ENCODE measurements at regions of chr1 and their contacts with region 1.

Region 1: DNA sequence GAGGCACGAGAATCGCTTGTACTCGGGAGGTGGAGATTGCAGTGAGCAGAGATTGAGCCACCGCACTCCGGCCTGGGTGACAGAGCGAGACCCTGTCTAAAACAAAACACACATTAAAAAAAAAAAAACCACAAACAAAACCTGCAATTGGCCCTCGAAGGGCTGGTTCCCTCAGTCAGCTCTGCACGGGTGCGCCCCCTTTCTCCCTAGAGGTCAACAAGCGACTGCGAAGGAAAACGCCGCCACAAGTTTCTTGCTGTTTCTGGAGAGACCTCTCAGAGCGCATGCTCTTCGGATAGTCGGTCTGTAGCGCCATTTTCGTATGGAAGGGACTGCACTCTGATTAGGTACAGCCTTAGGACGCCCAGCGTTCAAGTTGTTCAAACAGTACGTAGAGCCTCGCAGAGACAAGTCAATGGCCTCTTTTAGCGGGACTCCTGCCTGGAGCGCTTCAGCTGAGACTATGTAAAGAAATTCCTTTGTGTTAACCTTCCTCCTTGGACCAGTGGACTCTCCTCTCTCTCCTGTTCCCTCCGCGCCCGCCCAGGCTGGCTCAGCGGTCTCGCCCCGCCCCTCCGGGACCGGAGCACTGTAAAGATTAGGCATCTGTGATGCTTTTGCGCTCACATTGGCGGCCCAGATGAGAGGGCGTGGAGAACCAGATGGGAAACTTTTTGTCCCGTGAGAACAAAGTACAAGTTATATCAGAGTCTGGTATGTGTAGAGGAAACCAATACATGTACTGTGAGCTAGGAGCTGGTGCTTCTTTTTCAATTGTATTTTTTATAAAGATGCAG is 1.0 kb upstream of the CDC14A start:
- DNase-seq: peak; percentile 72 to 98 (median 82)
- ATAC-seq: peak; percentile 80
- H3K4me3 ChIP-seq: peak overlapping the region; percentile 91
- H3K27ac ChIP-seq: peak overlapping the region; percentile 98
- H3K4me1 ChIP-seq: peaks cover 21 to 43% of the 10 kb centered on the region in 2 experiments
- H3K27me3 ChIP-seq: no peaks in the 10 kb centered on the region
- CTCF ChIP-seq: peak; percentile 78 to 92 (median 79)
- EP300 ChIP-seq: no peak
- POLR2A ChIP-seq: peak; percentile 96
- RAD21 ChIP-seq: peak; percentile 36 to 51; a peak in 3 of 4 replicates

Region 2: DNA sequence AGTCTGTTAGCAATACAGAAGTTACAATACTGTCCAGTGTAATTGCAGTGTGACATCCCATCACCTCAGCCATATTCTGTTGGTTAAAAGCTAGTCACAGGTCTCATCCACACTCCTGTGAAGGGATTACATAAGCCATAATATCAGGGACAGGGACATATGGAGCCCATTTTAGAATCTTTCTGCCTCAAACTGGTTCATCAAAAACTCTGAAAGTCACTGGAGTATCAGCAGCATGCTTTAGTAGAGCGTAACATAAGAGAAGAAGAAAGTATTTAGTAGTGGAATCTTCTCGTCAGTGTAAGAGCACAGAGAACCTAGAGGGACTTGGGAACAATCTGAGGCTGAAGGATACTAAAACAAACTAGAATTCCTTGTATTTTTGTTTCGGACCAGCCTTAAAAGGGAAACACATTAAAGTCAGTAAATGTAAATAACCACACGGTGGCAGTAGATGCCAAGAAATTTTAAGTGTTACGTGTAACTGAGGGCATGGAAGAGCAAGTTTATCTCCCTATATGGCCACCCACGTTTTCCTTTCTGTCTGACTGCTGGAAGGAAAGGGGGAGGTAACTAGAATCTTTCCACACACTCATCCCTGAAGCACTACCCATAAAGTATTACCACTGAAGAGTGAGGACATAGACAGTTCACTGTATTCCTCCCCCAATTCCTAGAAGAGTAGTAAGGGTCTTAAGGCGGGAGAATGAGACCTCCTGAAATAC is 542.7 kb before region 1 on chr1:
- CTCF ChIA-PET with region 1: no interaction called
- POLR2A ChIA-PET with region 1: no interaction called
- in situ Hi-C with region 1: no loop called
- intact Hi-C with region 1: loop called (anchors 5 kb)
- DNase-seq: peak; percentile 74 to 93 (median 82)
- ATAC-seq: peak; percentile 95
- H3K4me3 ChIP-seq: no peak overlapping the region
- H3K27ac ChIP-seq: peak overlapping the region; percentile 69
- H3K4me1 ChIP-seq: peaks cover 0 to 11% of the 10 kb centered on the region in 2 experiments; a peak in 2 of 5 replicates
- H3K27me3 ChIP-seq: no peaks in the 10 kb centered on the region
- CTCF ChIP-seq: peak; percentile 54 to 84 (median 70)
- EP300 ChIP-seq: peak; percentile 52
- POLR2A ChIP-seq: no peak
- RAD21 ChIP-seq: peak; percentile 94 to 95

Region 3: GRCh38 chr1:99986656-99987225 is 364.6 kb before region 1 on chr1:
- CTCF ChIA-PET with region 1: no interaction called
- POLR2A ChIA-PET with region 1: no interaction called
- in situ Hi-C with region 1: no loop called
- intact Hi-C with region 1: no loop called
- DNase-seq: no peak
- ATAC-seq: peak; percentile 32
- H3K4me3 ChIP-seq: no peak overlapping the region
- H3K27ac ChIP-seq: no peak overlapping the region
- H3K4me1 ChIP-seq: 0 out of 5 replicates have a peak, but pooled peaks cover 0 to 2% of the 10 kb centered on the region in 2 experiments
- H3K27me3 ChIP-seq: no peaks in the 10 kb centered on the region
- CTCF ChIP-seq: no peak
- EP300 ChIP-seq: no peak
- POLR2A ChIP-seq: no peak
- RAD21 ChIP-seq: no peak

Region 4: DNA sequence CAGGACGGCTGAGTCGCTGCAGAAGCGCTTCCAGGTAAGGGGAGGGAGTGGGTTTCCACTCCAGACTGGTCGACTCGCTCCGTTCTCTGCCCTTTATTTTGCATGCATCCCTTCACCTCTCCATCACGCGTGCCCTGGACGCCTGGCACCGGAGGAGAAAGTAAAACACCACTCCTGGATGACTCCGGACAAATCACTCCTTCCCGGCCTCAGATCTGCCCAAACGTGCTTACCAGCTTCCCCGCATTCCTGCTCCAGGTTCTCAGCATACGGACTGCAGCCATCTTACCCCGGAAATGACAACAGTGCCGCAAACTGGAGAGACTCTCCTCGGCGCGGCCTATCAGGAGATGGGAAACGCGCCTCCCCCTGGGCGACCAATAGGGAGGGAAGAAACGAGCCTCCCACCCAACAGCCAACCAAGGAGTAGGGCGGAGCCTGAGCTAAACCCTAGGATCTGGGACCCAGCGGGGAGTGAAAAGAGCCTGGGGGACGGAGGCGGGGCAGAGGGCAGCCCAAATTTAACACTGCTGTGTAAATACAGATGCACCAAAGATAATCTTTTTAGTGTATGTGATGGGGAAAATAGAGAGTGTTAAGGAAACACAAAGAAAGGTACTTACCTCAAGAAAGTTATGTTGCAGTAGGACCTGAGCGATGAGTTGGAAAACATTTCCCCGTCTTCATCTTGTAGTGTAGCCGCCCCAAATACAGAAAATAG is 101.6 kb before region 1 on chr1 and contains the start of gene DBT:
- CTCF ChIA-PET with region 1: no interaction called
- POLR2A ChIA-PET with region 1: interaction called, 3 read pairs
- in situ Hi-C with region 1: no loop called
- intact Hi-C with region 1: loop called (anchors 10 kb)
- DNase-seq: peak; percentile 98 to 100 (median 100)
- ATAC-seq: peak; percentile 98
- H3K4me3 ChIP-seq: peak within 1 kb of the TSS; percentile 68
- H3K27ac ChIP-seq: peak within 1 kb of the TSS; percentile 83
- H3K4me1 ChIP-seq: peaks cover 4 to 21% of the 10 kb centered on the region in 2 experiments; a peak in 4 of 5 replicates
- H3K27me3 ChIP-seq: no peaks in the 10 kb centered on the region
- CTCF ChIP-seq: no peak
- EP300 ChIP-seq: peak; percentile 49
- POLR2A ChIP-seq: peak; percentile 98
- RAD21 ChIP-seq: 0 out of 4 replicates have a peak, but pooled peaks of 1 of the 2 experiments have one; percentile 7
- polyA plus RNA-seq, gene DBT: 2.7 to 3.3 TPM

Region 5: DNA sequence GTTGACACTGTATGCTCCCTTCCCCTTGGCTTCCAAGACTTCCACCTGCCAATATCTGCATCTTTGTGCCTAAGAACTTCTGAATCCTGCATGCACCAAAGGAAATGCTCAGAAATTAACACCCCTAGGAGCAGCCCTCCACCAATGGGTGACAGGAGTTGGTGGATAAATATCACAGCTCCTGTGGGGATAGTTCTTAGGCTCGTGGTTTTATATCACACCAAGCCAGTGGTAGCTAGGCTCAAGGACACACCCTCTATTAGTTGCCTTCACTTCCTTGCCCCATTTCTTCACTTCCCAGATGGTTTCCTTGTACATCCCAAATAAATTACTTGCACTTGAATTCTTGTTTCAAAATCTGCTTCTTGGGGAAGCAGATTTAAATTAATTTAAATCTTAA is 15.9 kb before region 1 on chr1:
- CTCF ChIA-PET with region 1: no interaction called
- POLR2A ChIA-PET with region 1: interaction called, 17 read pairs
- in situ Hi-C with region 1: no loop called
- intact Hi-C with region 1: no loop called
- DNase-seq: peak in 2 of 4 experiments; percentile 19 to 30
- ATAC-seq: no peak
- H3K4me3 ChIP-seq: no peak overlapping the region
- H3K27ac ChIP-seq: no peak overlapping the region
- H3K4me1 ChIP-seq: peaks cover 8 to 32% of the 10 kb centered on the region in 2 experiments; a peak in 3 of 5 replicates
- H3K27me3 ChIP-seq: no peaks in the 10 kb centered on the region
- CTCF ChIP-seq: no peak
- EP300 ChIP-seq: no peak
- POLR2A ChIP-seq: no peak
- RAD21 ChIP-seq: no peak

Region 6: GRCh38 chr1:100866041-100866900 is 515.0 kb after region 1 on chr1:
- CTCF ChIA-PET with region 1: no interaction called
- POLR2A ChIA-PET with region 1: no interaction called
- in situ Hi-C with region 1: no loop called
- intact Hi-C with region 1: no loop called
- DNase-seq: peak; percentile 31 to 48 (median 38)
- ATAC-seq: peak; percentile 84
- H3K4me3 ChIP-seq: no peak overlapping the region
- H3K27ac ChIP-seq: no peak overlapping the region
- H3K4me1 ChIP-seq: no peaks in the 10 kb centered on the region
- H3K27me3 ChIP-seq: no peaks in the 10 kb centered on the region
- CTCF ChIP-seq: peak; percentile 39 to 77 (median 58); a peak in 4 of 6 replicates
- EP300 ChIP-seq: no peak
- POLR2A ChIP-seq: no peak
- RAD21 ChIP-seq: peak; percentile 94